Head of caudate nucleus (tissue), 42 donors: ENCODE measurements at regions of chr13 and their contacts with region 1.

Region 1: DNA sequence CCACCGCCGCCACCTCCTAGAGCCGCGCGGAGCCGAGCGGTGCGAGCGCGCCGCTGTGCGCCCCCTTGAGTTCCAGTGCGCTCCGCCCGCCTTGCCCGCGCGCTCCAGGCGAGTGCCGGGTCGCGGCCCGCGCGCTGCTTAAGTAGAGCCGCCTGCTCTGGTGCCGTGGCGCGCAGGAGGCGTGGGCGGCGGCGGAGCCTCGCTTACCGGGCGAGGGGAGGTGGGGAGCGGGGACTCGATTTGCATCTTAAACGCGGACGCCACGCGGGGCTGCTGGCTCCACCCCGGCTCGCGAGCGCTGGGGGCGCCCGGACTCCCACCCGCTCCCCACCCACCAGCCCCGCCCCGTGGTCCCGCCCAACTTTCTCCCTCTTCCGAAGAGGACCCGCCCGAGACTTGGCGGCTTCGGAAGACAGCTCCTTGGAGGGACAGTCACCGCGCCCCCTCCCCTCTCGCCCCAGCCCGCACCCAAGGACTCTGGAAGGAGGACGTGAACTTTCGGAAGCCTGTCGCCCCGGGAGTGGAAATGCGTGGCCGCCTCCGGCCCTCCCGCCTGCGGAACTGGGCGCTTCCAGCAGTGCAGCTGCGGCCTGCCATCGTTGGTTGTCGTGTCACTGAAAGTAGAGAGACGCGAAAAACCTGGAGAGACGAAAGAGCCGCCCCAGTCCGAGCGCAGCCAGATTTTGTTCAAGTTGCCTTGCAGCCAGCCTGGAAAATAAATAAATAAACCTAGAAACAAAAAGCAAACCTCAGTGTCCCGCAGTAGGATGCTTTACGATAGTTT is at the start of gene KCTD12:
- DNase-seq: peak; percentile 47 to 89 (median 79)

Region 2: GRCh38 chr13:76667551-76667950 is 218.9 kb before region 1 on chr13:
- intact Hi-C with region 1: loop called (anchors 10 kb)
- DNase-seq: no peak

Region 3: DNA sequence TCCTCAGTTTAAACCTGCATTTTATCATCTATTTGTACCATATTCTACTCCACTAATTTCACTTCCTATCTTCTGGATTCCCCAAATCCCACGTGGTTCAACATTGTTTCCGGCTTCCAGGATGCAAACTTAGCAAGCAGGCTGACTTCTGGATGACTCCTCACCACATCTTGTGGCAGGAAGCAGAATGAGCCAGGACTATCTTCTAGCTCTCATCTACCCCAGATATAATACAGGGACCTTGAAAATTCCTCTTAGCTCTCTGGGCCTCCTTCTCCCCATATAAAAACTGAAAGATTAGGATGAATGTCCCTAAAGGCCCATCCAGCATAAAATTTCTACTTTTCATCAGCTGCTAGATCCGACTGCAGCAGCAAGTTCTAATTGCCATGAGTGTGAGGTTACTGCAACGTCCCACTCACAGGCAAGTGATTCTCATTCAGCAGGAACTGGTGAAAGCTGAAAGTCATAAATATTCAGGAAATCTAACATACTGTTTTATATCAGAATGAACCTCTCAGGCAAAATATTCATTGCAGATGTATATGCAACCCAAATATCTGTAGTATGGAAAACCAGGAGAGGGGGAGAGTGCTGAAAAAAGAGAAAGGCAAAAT is 93.6 kb before region 1 on chr13:
- intact Hi-C with region 1: loop called (anchors 10 kb)
- DNase-seq: peak in 17 of 42 donors; percentile 8 to 73 (median 37)